ENCODE measurements at regions of chr14 and their contacts with region 1.

Region 1: GRCh38 chr14:60807969-60808368 is 73.4 kb downstream of the MNAT1 start:
- DNase-seq: no peak
- H3K4me3 ChIP-seq: no peak overlapping the region
- H3K27me3 ChIP-seq: no peaks in the 10 kb centered on the region
- CTCF ChIP-seq: no peak

Region 2: DNA sequence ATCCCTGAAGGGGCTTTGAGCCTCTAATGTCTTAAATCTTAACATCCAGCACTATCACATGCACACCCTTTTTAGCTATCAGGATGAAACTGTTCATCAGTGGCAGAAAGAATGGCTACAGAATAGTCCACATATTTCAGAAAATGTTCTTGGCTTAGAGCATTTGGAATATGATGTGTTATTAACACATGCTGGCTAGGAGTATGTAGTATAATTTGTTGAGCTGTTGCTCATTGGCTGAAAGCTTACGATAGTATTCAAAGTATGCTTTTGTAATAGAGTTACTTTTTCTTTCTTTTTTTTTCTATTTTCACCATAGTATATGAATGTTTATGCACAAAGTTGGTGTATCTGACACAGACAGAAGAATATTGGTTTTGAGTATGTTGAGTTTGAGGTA is 18.3 kb before region 1 on chr14:
- CTCF ChIA-PET with region 1: no interaction called
- POLR2A ChIA-PET with region 1: no interaction called
- DNase-seq: no peak
- H3K4me3 ChIP-seq: no peak overlapping the region
- H3K27me3 ChIP-seq: no peaks in the 10 kb centered on the region
- CTCF ChIP-seq: no peak

Region 3: GRCh38 chr14:60848066-60848465 is 40.1 kb after region 1 on chr14:
- CTCF ChIA-PET with region 1: no interaction called
- POLR2A ChIA-PET with region 1: no interaction called
- DNase-seq: no peak
- H3K4me3 ChIP-seq: no peak overlapping the region
- H3K27me3 ChIP-seq: no peaks in the 10 kb centered on the region
- CTCF ChIP-seq: no peak

Region 4: DNA sequence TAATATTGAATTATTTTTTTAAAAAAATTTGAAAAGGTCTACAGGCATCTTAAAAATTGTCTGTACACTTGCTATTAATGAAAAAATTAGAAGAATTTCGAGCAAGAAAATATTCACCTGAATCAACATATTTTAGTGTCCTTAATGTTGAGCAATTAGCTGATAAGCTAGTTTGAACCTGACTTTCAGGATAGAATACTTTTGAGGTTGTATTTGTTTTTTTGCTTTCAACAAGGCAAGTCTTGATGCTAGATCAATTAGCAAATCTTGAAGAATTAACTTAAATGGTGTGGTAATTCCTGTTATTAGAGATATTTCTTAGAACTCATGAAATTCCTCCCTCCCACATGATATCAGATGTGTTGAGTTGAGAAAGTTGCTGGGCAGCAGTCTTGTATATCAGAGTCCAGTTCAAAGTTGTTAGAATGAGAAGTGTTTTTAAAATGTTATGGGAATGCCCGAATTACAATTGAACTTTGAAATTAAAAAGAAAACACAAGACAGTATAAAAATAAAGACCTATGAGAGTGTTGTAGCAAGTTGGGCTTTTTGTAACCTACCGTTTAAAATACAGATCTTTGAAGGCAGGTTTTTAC is 53.7 kb after region 1 on chr14:
- CTCF ChIA-PET with region 1: no interaction called
- POLR2A ChIA-PET with region 1: interaction called, 20 read pairs
- DNase-seq: no peak
- H3K4me3 ChIP-seq: no peak overlapping the region
- H3K27me3 ChIP-seq: no peaks in the 10 kb centered on the region
- CTCF ChIP-seq: no peak